Head of caudate nucleus (tissue), 42 donors: ENCODE measurements at regions of chr9 and their contacts with region 1.

Region 1: GRCh38 chr9:73200694-73201452 is 49.2 kb downstream of the ANXA1 start:
- DNase-seq: no peak

Region 2: GRCh38 chr9:73133921-73134407 is 66.9 kb before region 1 on chr9:
- intact Hi-C with region 1: no loop called
- DNase-seq: no peak

Region 3: DNA sequence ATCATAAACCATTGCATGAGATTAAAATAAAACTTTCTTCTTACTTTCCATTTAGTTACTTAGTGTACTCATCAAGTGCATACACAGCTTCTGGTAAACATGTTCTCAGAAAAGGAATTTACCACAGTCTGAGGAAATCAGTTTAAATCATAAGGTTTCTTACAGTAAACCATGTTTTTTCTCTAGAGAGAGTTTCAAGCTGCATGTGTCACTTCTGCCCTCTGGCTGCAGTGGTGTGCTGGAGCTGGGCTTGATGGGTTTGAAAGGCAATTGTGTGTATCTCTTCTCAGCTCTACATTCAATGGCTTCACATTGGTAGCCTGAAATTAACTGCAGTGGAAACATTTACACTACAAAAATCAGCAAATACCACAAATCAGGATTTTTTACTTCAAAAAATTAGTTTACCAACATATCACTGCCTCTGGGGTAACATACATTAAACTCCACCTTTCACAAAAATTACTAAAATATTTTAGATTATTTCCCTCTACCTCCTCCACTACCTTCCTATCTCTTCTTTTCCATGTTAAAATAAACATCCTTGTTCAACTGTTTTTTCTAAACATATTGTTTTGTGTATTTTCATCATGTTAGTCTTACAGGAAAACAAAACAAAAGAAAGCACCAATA is 365.1 kb after region 1 on chr9:
- intact Hi-C with region 1: loop called (anchors 10 kb)
- DNase-seq: peak in 41 of 42 donors; percentile 25 to 81 (median 54)

Region 4: GRCh38 chr9:74570879-74571512 is 1370.1 kb after region 1 on chr9:
- intact Hi-C with region 1: loop called (anchors 10 kb)
- DNase-seq: peak in 32 of 42 donors; percentile 9 to 82 (median 41)